ENCODE measurements at regions of chr14 and their contacts with region 1.

Region 1: DNA sequence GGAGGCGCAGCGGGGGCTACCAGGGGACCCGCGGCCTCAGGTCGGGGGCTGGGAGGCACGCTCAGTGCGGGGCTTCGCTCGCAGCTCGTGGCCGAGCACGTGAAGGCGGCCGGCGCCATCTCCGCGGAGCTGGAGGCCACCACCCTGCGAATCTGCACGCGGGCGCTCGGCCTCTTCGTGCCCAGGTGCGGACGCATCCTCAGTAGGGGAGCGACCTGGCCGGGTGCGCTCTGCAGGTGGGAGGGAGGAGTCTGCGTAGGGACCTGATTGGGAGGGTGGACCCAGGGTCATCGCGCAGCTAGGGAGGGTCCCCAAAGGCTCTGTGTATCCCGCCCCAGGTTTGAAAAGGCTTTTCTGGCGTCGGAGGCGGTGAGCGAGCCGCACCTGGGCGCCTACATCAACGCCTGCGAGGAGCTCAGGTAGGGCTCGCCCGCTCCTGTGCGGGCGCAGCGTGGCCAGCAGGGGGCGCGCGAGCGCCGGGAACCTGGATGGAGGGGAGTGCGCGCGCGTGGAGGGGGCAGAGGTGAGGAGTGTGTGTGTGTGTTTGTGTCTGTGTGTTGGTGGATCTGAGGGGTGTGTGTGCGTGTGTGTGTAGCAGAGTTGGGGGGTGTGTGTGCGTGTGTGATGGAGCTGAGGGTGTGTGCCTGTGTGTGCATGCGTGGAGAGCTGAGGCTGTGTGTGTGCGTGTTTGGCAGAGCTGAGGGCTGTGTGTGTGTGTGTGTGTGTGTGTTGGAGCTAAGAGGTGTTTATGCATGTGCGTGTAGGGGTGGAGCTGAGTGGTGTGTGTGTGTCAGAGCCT is 10.3 kb downstream of the EXOC3L4 start:
- DNase-seq: peak; percentile 89
- CTCF ChIP-seq: peak; percentile 98

Region 2: GRCh38 chr14:103185051-103185992 is 80.5 kb after region 1 on chr14:
- in situ Hi-C with region 1: loop called (anchors 5 kb)
- DNase-seq: peak; percentile 62
- CTCF ChIP-seq: peak; percentile 9

Region 3: GRCh38 chr14:103740991-103741689 is 636.3 kb after region 1 on chr14:
- in situ Hi-C with region 1: no loop called
- DNase-seq: no peak
- CTCF ChIP-seq: no peak

Measured in GM13976 (cell line).